CD4-positive, alpha-beta memory T cell (primary cell): ENCODE measurements at regions of chr13 and their contacts with region 1.

Region 1: GRCh38 chr13:99995589-99996380 is 14.2 kb downstream of the ZIC2 start:
- DNase-seq: peak in 1 of 5 donors; percentile 33
- H3K4me3 ChIP-seq: no peak overlapping the region
- H3K4me3 Mint-ChIP-seq: peak overlapping the region in 2 of 8 donors; percentile 8 to 48
- H3K27ac ChIP-seq: no peak overlapping the region
- H3K27ac Mint-ChIP-seq: peak overlapping the region in 3 of 7 donors; percentile 70 to 80 (median 73)
- H3K4me1 ChIP-seq: peaks cover 5% of the 10 kb centered on the region
- H3K4me1 Mint-ChIP-seq: peaks cover 0 to 5% (median under 1%) of the 10 kb centered on the region in 4 donors
- H3K27me3 ChIP-seq: peaks cover 82% of the 10 kb centered on the region
- H3K27me3 Mint-ChIP-seq: peaks cover 60 to 72% of the 10 kb centered on the region in 2 donors

Region 2: GRCh38 chr13:99959538-99960230 is 36.1 kb before region 1 on chr13:
- CTCF ChIA-PET with region 1: no interaction called
- POLR2A ChIA-PET with region 1: no interaction called
- intact Hi-C with region 1: loop called (anchors 5 kb)
- DNase-seq: peak in 1 of 5 donors; percentile 38
- H3K4me3 ChIP-seq: peak overlapping the region in 1 of 2 donors; percentile 30
- H3K4me3 Mint-ChIP-seq: peak overlapping the region; percentile 57 to 87 (median 78)
- H3K27ac ChIP-seq: no peak overlapping the region
- H3K27ac Mint-ChIP-seq: peak overlapping the region in 2 of 7 donors; percentile 79 to 82
- H3K4me1 ChIP-seq: peaks cover 47% of the 10 kb centered on the region
- H3K4me1 Mint-ChIP-seq: peaks cover 17 to 44% (median 28%) of the 10 kb centered on the region in 4 donors
- H3K27me3 ChIP-seq: peaks cover 85% of the 10 kb centered on the region
- H3K27me3 Mint-ChIP-seq: peaks cover 60 to 64% of the 10 kb centered on the region in 2 donors

Region 3: DNA sequence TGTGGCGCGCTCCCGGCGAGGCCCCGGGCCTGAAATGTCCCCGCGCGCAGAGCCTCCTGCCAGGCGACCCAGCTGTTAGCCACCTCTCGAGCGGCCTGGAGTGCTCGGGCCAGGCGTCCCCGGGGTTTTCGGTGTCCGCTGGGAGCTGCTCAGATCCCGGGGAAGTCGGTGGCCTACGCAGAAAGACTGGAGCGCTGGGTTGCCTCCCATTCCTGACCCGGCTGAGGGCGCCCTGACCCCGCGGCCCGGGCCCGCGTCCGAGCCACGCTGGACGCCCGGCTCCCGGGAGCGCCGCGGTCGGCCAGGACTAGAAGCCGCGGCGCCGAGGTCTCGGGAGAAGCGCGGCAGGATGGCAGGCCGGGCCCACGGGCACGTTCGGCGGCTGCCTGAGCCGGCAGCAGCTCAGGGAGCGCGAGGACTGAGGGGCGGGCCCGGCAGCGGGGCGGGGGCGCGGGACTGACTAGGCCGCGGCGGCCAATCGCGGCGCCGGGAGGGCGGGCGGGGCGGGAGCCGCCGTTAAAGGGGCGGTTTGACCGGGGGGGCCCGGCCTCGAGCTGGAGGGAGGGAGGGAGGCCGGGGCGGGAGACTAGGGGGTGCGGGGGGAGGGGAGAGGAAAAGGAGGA is 15.5 kb before region 1 on chr13:
- CTCF ChIA-PET with region 1: interaction called, 3 read pairs
- POLR2A ChIA-PET with region 1: interaction called, 9 read pairs
- intact Hi-C with region 1: loop called (anchors 2 kb)
- DNase-seq: peak in 4 of 5 donors; percentile 44 to 60 (median 55)
- H3K4me3 ChIP-seq: no peak overlapping the region
- H3K4me3 Mint-ChIP-seq: no peak overlapping the region
- H3K27ac ChIP-seq: no peak overlapping the region
- H3K27ac Mint-ChIP-seq: peak overlapping the region in 1 of 7 donors; percentile 90
- H3K4me1 ChIP-seq: peaks cover 37% of the 10 kb centered on the region
- H3K4me1 Mint-ChIP-seq: peaks cover 4 to 35% (median 16%) of the 10 kb centered on the region in 4 donors
- H3K27me3 ChIP-seq: peaks cover 78% of the 10 kb centered on the region
- H3K27me3 Mint-ChIP-seq: peaks cover 56 to 58% of the 10 kb centered on the region in 2 donors

Region 4: DNA sequence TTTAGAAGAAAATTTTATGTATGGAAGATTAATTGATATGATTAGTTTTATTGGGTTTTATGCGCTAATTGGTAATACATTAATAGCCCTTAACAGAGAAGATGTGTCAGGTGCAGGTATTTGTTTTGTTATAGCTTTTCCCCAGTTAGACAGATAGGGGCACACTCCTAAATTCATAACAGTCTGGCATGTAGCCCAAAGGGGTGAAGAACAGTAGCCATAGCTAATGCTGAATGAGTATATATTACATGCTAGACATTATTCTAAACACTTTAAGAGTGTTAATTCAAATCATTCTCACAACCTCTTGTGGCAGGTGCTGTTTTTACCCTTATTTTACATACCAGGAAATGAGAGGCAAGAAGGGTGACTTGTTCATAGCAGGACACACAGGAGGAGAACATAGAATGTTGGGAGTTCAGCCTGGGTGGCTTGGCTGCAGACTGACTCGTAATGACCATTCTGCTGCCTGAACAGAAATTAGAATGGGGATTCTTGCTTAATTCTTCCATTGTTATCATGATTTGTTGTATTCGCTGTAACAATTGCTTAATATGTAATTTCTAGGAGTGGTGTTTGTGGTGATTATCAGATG is 113.2 kb after region 1 on chr13:
- CTCF ChIA-PET with region 1: no interaction called
- POLR2A ChIA-PET with region 1: no interaction called
- intact Hi-C with region 1: no loop called
- DNase-seq: no peak
- H3K4me3 ChIP-seq: no peak overlapping the region
- H3K4me3 Mint-ChIP-seq: no peak overlapping the region
- H3K27ac ChIP-seq: no peak overlapping the region
- H3K27ac Mint-ChIP-seq: no peak overlapping the region
- H3K4me1 ChIP-seq: no peaks in the 10 kb centered on the region
- H3K4me1 Mint-ChIP-seq: peaks cover 0 to 8% (median 2%) of the 10 kb centered on the region in 4 donors
- H3K27me3 ChIP-seq: no peaks in the 10 kb centered on the region
- H3K27me3 Mint-ChIP-seq: no peaks in the 10 kb centered on the region